SK-N-SH (cell line): ENCODE measurements at regions of chr19 and their contacts with region 1.

Region 1: DNA sequence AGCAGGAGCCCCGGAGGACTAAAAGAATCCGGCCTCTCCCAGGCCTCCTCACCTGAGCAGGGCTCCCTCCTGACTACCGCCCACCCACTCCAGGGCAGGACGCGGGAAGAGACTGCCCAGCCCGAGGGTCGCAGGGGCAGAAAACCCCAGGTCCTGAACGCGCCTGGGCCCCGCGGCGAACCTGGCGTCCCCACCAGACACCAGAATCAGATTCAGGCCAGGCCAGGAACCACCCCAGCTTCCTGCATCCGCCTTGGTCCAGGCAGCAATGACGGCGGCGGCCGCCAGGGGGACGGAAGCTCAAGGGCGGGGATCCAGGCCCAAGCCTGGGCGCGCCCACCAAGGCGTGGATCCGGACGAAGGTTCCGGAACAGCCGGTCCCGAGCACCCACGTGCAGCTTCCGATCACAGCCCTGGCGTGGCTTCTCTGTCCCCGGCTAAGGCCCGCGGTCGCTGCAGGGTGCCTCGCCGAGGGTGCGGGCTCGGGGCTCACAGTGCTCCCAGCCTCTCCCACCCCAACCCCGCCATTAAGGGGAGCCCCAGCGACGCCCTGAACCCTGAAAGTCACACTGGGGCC is 3.6 kb downstream of the LGALS7 start:
- DNase-seq: peak; percentile 83
- H3K4me3 ChIP-seq: no peak overlapping the region; a peak in 1 of 4 replicates
- H3K27ac ChIP-seq: no peak overlapping the region
- H3K4me1 ChIP-seq: no peaks in the 10 kb centered on the region
- H3K27me3 ChIP-seq: no peaks in the 10 kb centered on the region
- CTCF ChIP-seq: peak; percentile 49
- EP300 ChIP-seq: no peak
- RAD21 ChIP-seq: peak; percentile 27

Region 2: GRCh38 chr19:38786572-38787265 is 17.0 kb after region 1 on chr19:
- CTCF ChIA-PET with region 1: interaction called, 13 read pairs
- POLR2A ChIA-PET with region 1: no interaction called
- DNase-seq: no peak
- H3K4me3 ChIP-seq: no peak overlapping the region
- H3K27ac ChIP-seq: no peak overlapping the region
- H3K4me1 ChIP-seq: no peaks in the 10 kb centered on the region
- H3K27me3 ChIP-seq: no peaks in the 10 kb centered on the region
- CTCF ChIP-seq: no peak
- EP300 ChIP-seq: no peak
- RAD21 ChIP-seq: no peak